Esophagus muscularis mucosa (tissue), 4 donors: ENCODE measurements at regions of chr16 and their contacts with region 1.

Region 1: GRCh38 chr16:578870-579405 is 9.2 kb downstream of the PIGQ start:
- DNase-seq: no peak
- H3K4me3 ChIP-seq: peak overlapping the region in 3 of 4 donors; percentile 9 to 34 (median 31)
- H3K27ac ChIP-seq: peak overlapping the region in 1 of 4 donors; percentile 3
- H3K4me1 ChIP-seq: peaks cover 6 to 20% (median 14%) of the 10 kb centered on the region in 4 donors
- H3K27me3 ChIP-seq: no peaks in the 10 kb centered on the region
- CTCF ChIP-seq: peak; percentile 59 to 84 (median 69)
- EP300 ChIP-seq: no peak
- POLR2A ChIP-seq: no peak

Region 2: GRCh38 chr16:660459-661183 is 81.7 kb after region 1 on chr16:
- intact Hi-C with region 1: loop called (anchors 5 kb)
- DNase-seq: peak; percentile 97
- H3K4me3 ChIP-seq: peak overlapping the region; percentile 40 to 50 (median 48)
- H3K27ac ChIP-seq: peak overlapping the region; percentile 81 to 85 (median 82)
- H3K4me1 ChIP-seq: peaks cover 10 to 25% (median 20%) of the 10 kb centered on the region in 4 donors
- H3K27me3 ChIP-seq: no peaks in the 10 kb centered on the region
- CTCF ChIP-seq: peak; percentile 54 to 69 (median 61)
- EP300 ChIP-seq: no peak
- POLR2A ChIP-seq: no peak